Cardiac septum (tissue), 1 donor: ENCODE measurements at regions of chr22 and their contacts with region 1.

Region 1: DNA sequence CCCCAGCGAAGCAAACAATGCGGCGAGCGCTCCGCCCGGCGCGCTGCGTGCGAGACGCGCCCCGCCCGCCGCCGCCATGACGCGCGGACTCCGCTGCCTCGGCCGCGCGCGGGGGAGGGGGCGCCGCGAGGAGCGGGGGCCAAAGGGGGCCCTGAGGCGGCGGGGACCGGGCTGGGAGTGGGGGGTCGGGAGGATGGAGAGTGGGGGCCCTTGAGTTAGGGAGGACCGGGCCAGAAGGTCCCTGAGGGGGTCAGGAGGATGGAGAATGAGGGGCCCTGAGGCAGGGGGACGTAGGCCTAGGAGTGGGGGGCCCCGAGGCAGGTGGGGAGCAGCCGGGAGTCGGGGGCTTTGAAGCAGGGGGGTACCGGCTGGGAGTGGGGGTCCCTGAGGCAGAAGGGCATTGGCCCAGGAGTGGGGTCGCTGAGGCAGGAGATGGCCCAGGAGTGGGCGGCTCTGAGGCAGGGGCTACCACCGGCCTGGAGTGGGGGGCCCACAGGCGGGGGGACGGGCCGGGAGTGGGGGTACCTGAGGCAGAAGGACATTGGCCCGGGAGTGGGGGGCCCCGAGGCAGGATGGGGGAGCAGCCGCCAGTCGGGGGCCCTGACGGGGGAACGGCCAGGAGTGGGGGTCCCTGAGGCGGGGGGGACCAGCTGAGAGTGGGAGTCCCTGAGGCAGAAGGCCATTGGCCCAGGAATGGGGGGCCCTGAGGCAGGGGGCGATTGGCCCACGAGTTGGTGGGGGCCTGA is at the start of gene BRD1:
- DNase-seq: peak; percentile 84
- total RNA-seq, gene BRD1: 18.0 TPM

Region 2: DNA sequence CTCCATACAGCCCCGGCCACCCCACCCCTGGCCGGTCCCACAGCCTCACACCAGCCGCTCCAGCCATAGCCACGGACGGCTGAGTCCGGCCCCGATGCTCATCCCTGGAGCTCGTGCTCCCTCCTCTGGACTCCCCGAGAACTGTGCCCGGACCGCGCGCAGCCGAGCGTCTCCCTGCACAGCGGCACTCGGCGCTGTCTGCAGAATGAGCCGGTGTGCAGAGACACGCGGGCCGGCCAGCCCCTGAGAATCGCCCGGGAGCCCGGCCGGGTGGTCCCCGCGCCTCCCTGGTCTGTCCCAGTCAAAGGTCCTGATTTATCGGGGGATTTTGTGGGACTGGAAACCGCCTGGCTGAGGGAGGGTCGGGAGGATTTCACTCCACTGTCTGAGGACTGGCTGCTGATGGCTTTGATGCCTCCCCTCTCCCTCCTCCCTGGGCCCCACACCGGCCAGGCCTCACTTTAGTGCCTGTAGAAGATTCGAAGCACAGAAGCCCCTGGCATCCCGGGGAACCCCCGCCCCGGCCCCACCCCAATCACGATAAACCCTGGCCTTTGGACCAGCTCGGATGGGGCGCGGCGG is 103.0 kb before region 1 on chr22:
- intact Hi-C with region 1: no loop called
- DNase-seq: no peak

Region 3: DNA sequence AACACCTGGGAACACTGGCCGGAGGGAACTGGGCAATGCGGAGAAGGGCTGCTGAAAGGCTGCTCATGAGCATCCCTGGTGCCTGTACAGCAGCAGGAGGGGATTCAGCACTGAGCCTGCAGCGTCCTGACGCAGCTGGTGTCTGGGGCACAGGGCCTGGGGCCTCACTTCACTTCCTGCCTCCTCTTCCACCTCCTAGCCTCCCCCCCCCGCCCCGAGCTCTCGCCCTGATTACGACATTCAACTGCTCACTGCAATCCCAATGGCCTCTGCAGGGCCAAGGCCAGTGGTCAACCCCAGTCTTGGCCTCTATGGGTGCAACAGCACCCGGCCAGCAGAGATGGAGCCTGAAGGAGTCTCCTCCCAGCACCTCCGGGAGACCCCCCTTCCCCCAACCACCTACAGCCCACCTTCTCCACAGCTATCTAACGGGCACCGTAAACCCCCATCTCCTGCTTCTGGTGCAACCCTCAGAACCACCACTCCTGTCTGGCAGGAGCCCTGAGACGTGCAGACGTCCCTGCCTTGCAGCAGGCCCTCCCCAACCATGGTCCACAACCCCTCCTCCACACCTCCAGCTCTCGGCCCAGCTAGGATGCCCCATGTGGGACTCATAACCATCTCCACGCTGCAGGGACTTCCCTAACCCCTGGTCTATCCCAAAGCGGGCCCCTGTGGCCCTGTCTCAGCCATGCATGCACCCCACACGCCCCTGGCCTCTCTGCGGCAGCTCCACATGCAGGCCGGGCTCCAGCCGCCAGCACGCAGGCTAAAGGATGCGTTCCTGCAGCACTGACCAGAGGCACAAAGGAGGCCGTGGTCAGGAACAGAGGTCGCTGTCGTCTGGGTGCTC is 38.5 kb before region 1 on chr22:
- intact Hi-C with region 1: loop called (anchors 5 kb)
- DNase-seq: peak; percentile 71

Region 4: GRCh38 chr22:49852898-49853894 is 25.2 kb after region 1 on chr22 and contains the start of gene ZBED4:
- intact Hi-C with region 1: loop called (anchors 2 kb)
- DNase-seq: peak; percentile 99
- total RNA-seq, gene ZBED4: 6.2 TPM